GM18951 (cell line): ENCODE measurements at regions of chr12 and their contacts with region 1.

Region 1: GRCh38 chr12:92145731-92146496 is at the start of gene BTG1:
- POLR2A ChIP-seq: peak; percentile 100

Region 2: DNA sequence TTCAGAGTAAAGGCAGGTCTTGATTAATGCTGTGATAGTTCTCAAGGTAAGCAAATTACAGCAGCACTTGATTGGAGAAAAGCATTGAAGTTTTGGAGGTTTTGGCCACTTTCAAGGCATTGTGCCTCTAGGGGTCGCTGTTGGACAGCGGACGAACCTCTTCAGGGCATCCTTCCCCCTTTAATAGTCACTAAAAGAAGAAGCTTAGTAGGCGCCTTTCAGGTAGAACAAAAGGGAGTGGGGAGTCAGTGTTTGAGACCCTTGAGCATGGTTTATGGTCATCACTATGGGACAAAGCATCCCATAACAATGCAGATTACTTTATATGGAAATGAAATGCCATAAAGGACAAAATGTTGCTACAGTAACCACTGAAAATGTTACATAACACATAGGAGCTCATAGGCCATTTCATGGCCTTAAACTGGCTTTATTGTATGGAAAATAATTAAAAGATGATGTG is 763.8 kb before region 1 on chr12:
- in situ Hi-C with region 1: loop called (anchors 25 kb)
- POLR2A ChIP-seq: no peak

Region 3: GRCh38 chr12:91577586-91578539 is 568.1 kb before region 1 on chr12:
- in situ Hi-C with region 1: loop called (anchors 25 kb)
- POLR2A ChIP-seq: no peak

Region 4: GRCh38 chr12:91811481-91812287 is 334.2 kb before region 1 on chr12:
- in situ Hi-C with region 1: loop called (anchors 25 kb)
- POLR2A ChIP-seq: no peak

Region 5: DNA sequence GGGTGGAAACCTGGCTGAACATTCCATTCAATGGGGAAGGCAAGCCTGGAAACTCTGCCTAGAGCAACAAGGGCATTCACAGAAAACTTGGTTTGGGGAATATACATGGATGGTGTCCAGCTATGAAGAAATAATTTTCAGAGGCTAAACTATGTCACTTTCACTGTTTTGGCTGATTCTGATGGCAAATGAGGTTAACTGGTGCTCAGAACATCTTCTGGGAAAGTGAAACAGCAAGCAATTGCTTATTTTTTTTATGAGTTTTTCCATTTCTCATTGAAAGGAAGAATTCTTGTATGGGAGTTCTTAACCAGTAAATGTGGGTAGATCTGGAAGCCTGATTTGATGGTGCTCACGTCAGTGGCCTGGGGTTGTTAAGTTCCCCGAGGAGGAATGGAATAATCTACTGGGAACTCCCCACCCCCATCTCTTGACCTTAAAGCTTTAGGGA is 132.5 kb after region 1 on chr12:
- in situ Hi-C with region 1: no loop called
- POLR2A ChIP-seq: no peak

Region 6: GRCh38 chr12:92570056-92570753 is 424.3 kb after region 1 on chr12:
- in situ Hi-C with region 1: loop called (anchors 10 kb)
- POLR2A ChIP-seq: no peak